Activated CD4-positive, alpha-beta memory T cell treated with anti-CD3 and anti-CD28 coated beads for 36 hours (primary cell): ENCODE measurements at regions of chr12 and their contacts with region 1.

Region 1: GRCh38 chr12:57899010-57899662 is 42.2 kb upstream of the ATP23 start:
- DNase-seq: peak; percentile 91
- H3K4me3 Mint-ChIP-seq: peak overlapping the region; percentile 66
- H3K27ac Mint-ChIP-seq: peak overlapping the region; percentile 94
- H3K4me1 Mint-ChIP-seq: peaks cover 54% of the 10 kb centered on the region
- H3K27me3 Mint-ChIP-seq: no peaks in the 10 kb centered on the region

Region 2: DNA sequence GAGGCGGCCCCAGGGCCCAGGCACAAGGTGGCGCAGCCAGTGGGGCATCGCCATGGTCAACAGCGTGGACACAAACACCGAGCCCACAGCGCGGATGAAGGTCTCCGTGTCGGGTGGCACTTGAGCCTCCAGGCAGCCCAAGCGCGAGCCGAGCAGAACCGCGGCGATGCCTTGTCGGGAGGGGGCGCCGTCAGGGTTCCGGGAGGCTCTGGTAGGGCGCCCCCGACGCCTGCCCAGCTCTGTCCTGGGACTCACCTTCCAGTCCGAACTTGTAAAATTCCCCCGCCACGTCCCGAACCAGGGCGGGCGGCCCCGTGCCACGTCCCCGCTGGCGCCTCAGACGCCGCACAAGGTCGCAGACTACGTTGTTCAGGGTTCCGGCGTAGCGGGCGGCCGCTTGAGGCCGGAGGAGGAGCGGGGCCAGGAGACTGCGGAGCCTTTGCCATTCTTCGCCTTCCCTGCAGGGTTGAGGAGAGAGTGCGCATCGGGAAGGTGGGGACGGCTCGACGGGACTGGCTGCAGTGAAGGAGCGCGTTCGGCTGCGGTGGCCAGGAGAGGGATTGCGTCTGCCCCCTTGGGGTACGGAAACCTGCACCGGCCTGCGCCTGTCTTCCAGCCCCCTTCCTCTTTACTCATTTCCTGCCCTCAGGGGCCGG is 134.0 kb before region 1 on chr12:
- CTCF ChIA-PET with region 1: interaction called, 6 read pairs
- POLR2A ChIA-PET with region 1: no interaction called
- intact Hi-C with region 1: loop called (anchors 2 kb)
- DNase-seq: peak; percentile 79
- H3K4me3 Mint-ChIP-seq: peak overlapping the region; percentile 86
- H3K27ac Mint-ChIP-seq: peak overlapping the region; percentile 77
- H3K4me1 Mint-ChIP-seq: peaks cover 28% of the 10 kb centered on the region
- H3K27me3 Mint-ChIP-seq: peaks cover 2% of the 10 kb centered on the region

Region 3: GRCh38 chr12:57836442-57837375 is 62.4 kb before region 1 on chr12:
- CTCF ChIA-PET with region 1: interaction called, 153 read pairs
- POLR2A ChIA-PET with region 1: interaction called, 13 read pairs
- intact Hi-C with region 1: loop called (anchors 1 kb)
- DNase-seq: peak; percentile 72
- H3K4me3 Mint-ChIP-seq: peak overlapping the region; percentile 48
- H3K27ac Mint-ChIP-seq: peak overlapping the region; percentile 86
- H3K4me1 Mint-ChIP-seq: peaks cover 93% of the 10 kb centered on the region
- H3K27me3 Mint-ChIP-seq: no peaks in the 10 kb centered on the region

Region 4: DNA sequence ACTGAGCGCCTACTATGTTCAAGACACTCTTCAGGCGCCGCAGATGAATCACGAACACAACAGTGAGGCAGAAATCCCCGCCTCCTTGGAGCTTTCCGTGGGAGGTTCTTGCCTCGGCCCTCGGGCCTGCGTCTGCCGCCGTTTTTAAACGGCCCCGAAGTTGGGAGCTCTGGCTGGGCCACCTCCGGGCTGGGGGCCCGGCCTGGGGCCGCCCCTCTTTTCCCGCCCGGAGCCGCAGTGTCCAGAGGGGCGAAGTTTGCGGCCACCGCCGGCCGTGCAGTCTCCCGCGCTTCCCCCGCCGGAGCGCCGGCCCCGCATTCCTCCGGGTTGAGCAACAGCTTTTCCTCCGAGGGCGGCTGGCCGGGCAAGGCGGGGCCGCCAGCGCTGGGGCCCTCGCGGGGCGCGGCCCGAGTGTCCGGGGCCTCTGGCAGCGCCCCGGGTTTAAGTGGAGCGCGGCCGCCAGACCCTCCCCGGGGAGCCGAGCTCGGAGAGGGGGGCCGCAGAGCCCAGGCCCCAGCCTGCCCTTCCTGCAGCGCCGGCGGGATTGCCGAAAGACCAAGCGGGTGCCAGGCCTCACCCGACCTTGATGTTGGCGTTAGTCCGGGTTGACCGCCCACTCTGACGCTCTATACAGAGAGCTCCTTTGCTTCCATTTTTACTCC is 33.9 kb before region 1 on chr12:
- CTCF ChIA-PET with region 1: interaction called, 5 read pairs
- POLR2A ChIA-PET with region 1: interaction called, 11 read pairs
- intact Hi-C with region 1: loop called (anchors 2 kb)
- DNase-seq: peak; percentile 83
- H3K4me3 Mint-ChIP-seq: peak overlapping the region; percentile 59
- H3K27ac Mint-ChIP-seq: no peak overlapping the region
- H3K4me1 Mint-ChIP-seq: peaks cover 4% of the 10 kb centered on the region
- H3K27me3 Mint-ChIP-seq: no peaks in the 10 kb centered on the region

Region 5: DNA sequence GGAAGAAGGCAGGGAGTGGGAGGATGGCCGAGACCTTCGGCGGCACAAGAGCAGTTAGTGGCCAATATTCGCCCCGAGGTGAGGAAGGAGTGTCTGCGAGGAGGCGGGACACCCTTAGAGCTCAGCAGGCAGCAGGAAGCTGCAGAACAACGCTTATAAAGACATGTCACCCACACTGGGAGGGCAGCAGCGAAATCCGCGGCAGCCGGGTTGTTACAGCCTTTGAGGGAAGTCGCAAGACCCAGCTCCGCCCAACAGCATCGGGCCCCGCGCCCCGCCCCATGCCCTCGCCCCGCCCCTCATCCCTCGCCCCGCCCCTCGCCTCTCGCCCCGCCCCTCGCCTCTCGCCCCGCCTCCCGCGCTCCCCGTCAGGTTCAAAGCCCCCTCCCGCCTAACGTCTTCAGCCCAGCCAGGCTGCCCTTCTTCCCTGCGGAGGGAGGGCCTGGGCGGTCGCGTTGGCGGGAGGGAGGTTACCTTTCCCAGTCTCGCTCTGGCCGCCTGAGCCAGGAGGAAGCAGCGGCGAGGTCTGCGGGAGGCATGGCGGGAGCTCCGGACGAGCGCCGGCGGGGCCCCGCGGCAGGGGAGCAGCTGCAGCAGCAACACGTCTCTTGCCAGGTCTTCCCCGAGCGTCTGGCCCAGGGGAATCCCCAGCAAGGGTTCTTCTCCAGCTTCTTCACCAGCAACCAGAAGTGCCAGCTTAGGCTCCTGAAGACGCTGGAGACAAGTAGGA is 42.2 kb after region 1 on chr12 and contains the start of gene ATP23:
- CTCF ChIA-PET with region 1: no interaction called
- POLR2A ChIA-PET with region 1: no interaction called
- intact Hi-C with region 1: loop called (anchors 1 kb)
- DNase-seq: peak; percentile 92
- H3K4me3 Mint-ChIP-seq: peak within 1 kb of the TSS; percentile 86
- H3K27ac Mint-ChIP-seq: peak within 1 kb of the TSS; percentile 93
- H3K4me1 Mint-ChIP-seq: peaks cover 43% of the 10 kb centered on the region
- H3K27me3 Mint-ChIP-seq: no peaks in the 10 kb centered on the region
- total RNA-seq, gene ATP23: 14.9 to 16.3 TPM

Region 6: DNA sequence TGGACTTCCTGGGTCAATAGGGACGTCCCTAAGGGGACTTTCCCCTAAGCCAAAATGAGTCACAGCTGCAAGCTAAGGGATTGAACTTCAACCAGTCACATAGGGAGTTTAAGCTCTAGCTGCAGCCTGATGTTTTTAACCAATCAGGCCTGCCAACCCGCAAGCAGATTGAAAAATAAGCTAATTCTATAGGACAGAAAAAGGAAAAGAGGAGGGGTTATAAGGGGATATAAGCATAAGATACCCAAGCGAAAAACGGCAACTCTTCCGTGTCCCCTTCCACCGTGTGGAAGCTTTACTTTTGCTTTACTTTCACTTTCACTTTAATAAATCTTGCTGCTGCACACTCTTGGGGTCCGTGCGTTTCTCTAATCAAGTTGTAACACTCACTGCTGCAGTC is 66.6 kb after region 1 on chr12:
- CTCF ChIA-PET with region 1: no interaction called
- POLR2A ChIA-PET with region 1: no interaction called
- intact Hi-C with region 1: no loop called
- DNase-seq: no peak
- H3K4me3 Mint-ChIP-seq: no peak overlapping the region
- H3K27ac Mint-ChIP-seq: no peak overlapping the region
- H3K4me1 Mint-ChIP-seq: no peaks in the 10 kb centered on the region
- H3K27me3 Mint-ChIP-seq: no peaks in the 10 kb centered on the region

Region 7: GRCh38 chr12:58009405-58010195 is 110.5 kb after region 1 on chr12:
- CTCF ChIA-PET with region 1: no interaction called
- POLR2A ChIA-PET with region 1: no interaction called
- intact Hi-C with region 1: no loop called
- DNase-seq: no peak
- H3K4me3 Mint-ChIP-seq: no peak overlapping the region
- H3K27ac Mint-ChIP-seq: no peak overlapping the region
- H3K4me1 Mint-ChIP-seq: no peaks in the 10 kb centered on the region
- H3K27me3 Mint-ChIP-seq: peaks cover 1% of the 10 kb centered on the region